OCI-LY7 (cell line): ENCODE measurements at regions of chr15 and their contacts with region 1.

Region 1: GRCh38 chr15:99733268-99734039 is at the start of gene LYSMD4:
- DNase-seq: peak; percentile 97
- H3K4me3 ChIP-seq: peak within 1 kb of the TSS; percentile 75
- H3K27ac ChIP-seq: no peak within 1 kb of the TSS
- H3K4me1 ChIP-seq: peaks cover 3% of the 10 kb centered on the region
- CTCF ChIP-seq: no peak
- total RNA-seq, gene LYSMD4: 6.5 and 7.0 TPM in 2 replicates

Region 2: DNA sequence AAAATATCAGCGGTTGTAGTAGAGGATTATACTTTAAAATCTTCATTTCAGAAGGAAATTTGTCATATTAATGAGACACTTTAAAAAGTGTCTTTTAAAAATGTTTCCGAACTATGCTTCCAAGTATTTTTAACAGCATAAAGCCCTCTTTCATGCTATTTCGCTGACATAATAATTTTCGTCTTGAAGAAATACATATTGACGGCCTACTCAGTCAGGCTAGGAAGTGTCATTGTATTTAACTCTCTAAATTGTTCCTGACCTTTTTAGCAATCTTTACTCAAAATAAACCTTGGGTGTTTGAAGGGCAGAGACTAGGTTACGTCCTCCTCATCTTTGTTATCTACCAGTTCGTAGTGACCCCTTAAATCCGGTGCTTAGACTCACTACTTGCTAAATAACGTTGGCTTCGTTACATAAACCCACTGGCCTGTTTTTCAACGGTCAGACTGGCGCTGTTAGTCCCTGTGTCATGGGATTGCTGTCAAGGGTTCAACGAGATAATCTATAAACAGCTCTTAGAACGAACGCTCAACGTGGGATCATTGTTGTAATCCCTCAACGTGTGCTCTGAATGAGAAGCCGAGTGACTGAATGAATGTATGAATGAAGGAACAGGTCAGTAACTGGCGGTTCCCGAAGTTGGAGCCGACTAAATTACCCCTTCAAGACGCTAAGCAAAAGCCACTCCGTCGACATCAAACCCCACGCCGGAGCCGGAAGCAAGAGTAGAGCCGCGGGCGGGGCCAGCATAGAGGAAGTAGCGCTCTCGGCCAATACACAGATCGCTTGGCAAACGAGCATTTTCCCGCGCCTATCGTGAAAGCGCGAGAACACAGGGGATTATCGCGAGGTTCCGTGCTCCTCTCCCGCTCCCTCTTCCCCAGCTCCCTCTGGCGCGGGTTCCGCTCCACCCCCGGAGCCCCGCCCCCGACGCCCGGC is 482.7 kb before region 1 on chr15:
- CTCF ChIA-PET with region 1: no interaction called
- POLR2A ChIA-PET with region 1: interaction called, 5 read pairs
- intact Hi-C with region 1: loop called (anchors 1 kb)
- DNase-seq: peak; percentile 99
- H3K4me3 ChIP-seq: peak overlapping the region; percentile 97
- H3K27ac ChIP-seq: peak overlapping the region; percentile 88
- H3K4me1 ChIP-seq: peaks cover 30% of the 10 kb centered on the region
- CTCF ChIP-seq: no peak

Region 3: DNA sequence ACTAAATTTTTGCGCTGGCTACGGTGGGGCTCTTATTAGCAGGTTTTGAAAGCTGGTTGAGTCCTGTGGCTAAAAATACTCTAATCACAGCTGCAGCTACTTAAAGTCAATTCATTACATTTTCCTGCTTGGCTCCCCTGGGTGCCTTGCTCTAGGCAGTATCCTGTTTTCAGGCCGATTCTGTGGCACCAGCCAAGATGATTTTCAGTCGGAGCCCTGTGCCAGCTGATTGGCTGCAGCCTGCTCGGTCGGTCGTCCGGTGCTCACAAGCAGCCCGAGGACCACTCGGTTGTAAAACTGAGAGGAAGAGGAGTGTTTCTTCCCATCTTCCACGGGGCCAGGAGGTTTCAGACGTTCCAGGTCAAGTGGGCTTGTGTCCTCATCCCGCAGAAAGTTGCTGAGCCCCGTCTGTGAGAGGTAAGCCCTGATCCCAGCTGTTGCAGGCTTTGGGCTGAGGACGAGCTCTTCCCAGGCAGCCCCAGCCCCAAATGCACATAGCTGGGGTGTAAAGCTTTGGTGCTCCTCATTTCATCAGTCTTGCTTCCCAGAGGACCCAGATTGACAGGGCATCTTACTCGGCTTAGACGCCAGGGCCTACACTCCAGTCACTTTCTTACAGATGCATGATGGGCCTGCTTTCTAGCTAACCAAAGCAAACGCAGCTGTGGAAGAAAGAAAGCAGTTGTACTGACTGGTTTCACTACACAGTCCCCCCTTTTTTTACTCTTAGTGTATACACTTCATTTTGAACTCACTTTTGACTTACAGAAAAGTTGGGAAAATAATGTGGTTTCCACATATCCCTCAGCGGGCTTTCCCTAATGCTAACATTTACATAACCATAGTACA is 16.1 kb before region 1 on chr15:
- CTCF ChIA-PET with region 1: interaction called, 11 read pairs
- POLR2A ChIA-PET with region 1: interaction called, 15 read pairs
- intact Hi-C with region 1: no loop called
- DNase-seq: no peak
- H3K4me3 ChIP-seq: no peak overlapping the region
- H3K27ac ChIP-seq: no peak overlapping the region
- H3K4me1 ChIP-seq: peaks cover 13% of the 10 kb centered on the region
- CTCF ChIP-seq: no peak